Right ventricle myocardium superior (tissue), 1 donor: ENCODE measurements at regions of chr10 and their contacts with region 1.

Region 1: GRCh38 chr10:61192042-61192441 is 248.1 kb upstream of the RHOBTB1 start:
- DNase-seq: no peak
- ATAC-seq: no peak

Region 2: GRCh38 chr10:61140765-61141392 is 51.2 kb before region 1 on chr10:
- intact Hi-C with region 1: loop called (anchors 2 kb)
- DNase-seq: no peak
- ATAC-seq: peak; percentile 72